CD8-positive, alpha-beta memory T cell (primary cell): ENCODE measurements at regions of chr14 and their contacts with region 1.

Region 1: DNA sequence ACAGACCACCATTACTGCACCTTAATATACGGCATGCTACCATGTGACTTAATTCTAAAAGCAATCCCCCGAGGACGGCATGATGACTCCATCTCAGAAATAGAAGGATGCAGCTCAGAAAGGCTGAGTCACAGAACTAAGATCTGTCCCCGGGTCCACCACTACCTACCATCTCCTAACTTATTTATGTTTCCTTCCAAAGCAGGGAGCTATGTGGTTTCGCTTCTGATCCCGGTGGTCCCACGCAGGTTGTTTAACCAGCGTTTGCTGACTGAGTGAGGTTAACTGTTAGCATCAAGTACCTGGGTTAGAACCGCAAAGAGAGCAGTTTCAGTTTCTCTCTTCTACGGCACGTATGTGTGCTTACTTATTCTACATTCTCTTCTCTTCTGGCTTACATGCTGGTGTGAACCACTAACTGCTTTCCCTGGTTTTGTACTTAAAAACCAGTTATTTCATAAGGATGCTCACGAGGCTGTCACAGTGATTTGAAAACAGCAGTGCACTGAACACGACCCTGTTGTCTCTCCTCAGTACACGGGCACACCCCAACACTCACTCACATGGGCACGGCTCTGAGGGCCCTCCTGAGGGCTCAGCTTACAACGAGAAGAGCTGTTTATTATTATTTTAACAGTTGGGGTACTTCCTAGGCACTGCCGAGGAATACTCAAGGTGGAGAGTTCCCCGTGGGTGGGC is 66.7 kb downstream of the CCDC88C start:
- DNase-seq: peak; percentile 40 to 80 (median 78)
- H3K4me3 ChIP-seq: peak overlapping the region; percentile 62
- H3K4me3 Mint-ChIP-seq: peak overlapping the region; percentile 77 to 93 (median 85)
- H3K27ac ChIP-seq: peak overlapping the region; percentile 66
- H3K27ac Mint-ChIP-seq: peak overlapping the region; percentile 91 to 99 (median 98)
- H3K4me1 ChIP-seq: peaks cover 86% of the 10 kb centered on the region
- H3K4me1 Mint-ChIP-seq: peaks cover 91 to 97% (median 95%) of the 10 kb centered on the region in 3 donors
- H3K27me3 ChIP-seq: no peaks in the 10 kb centered on the region
- H3K27me3 Mint-ChIP-seq: no peaks in the 10 kb centered on the region

Region 2: DNA sequence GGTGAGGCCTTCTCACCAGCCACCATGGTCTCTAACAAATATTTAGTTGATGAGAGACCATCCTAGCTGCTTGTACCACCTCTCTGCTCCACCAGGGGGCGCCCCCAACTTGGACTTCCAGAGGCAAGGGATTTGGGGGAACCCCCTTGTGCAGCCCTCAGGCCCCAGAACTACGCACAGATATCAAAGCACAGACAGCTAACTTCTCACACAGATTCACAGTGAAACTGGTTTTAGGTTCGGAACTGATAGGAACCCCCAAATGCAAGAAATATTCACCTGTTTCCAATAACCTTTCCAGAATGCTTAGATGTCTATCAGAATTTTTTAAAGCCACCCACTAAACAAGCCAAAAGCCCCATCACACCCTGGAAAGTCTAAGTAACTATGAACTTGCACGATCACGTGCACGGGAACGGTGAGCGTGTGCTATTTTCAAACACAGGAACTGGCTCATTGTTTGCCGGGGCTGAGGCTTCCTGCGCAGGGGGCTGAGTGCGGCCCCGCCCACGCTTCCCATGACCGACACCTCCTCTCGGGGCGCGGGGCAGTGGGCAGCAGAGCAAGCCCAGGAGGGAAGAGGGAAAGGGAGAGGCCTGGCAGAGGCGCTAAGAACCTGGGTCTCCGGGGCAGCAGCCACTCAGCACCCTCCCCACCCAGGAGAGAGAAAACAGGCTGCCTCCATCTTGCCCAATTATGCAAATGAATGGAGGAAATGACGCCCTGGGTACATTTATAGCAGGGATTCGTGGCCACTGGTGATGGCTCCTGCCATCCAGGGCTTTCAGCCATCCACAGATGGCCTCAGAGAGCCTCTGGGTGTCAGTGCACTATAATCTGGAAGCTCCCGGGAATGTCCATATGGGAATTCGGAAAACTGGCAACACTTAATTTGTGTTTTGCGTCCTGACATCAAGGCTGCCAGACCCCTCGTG is 27.0 kb before region 1 on chr14:
- CTCF ChIA-PET with region 1: interaction called, 52 read pairs
- POLR2A ChIA-PET with region 1: interaction called, 10 read pairs
- DNase-seq: peak; percentile 86 to 94 (median 91)
- H3K4me3 ChIP-seq: peak overlapping the region; percentile 32
- H3K4me3 Mint-ChIP-seq: peak overlapping the region; percentile 60 to 92 (median 82)
- H3K27ac ChIP-seq: peak overlapping the region; percentile 83
- H3K27ac Mint-ChIP-seq: peak overlapping the region; percentile 97 to 99 (median 98)
- H3K4me1 ChIP-seq: peaks cover 94% of the 10 kb centered on the region
- H3K4me1 Mint-ChIP-seq: peaks cover 67 to 87% (median 86%) of the 10 kb centered on the region in 3 donors
- H3K27me3 ChIP-seq: no peaks in the 10 kb centered on the region
- H3K27me3 Mint-ChIP-seq: peaks cover 0 to 2% of the 10 kb centered on the region in 2 donors

Region 3: GRCh38 chr14:91367173-91368171 is 16.5 kb after region 1 on chr14:
- CTCF ChIA-PET with region 1: interaction called, 95 read pairs
- POLR2A ChIA-PET with region 1: interaction called, 5 read pairs
- DNase-seq: peak; percentile 66 to 82 (median 78)
- H3K4me3 ChIP-seq: peak overlapping the region; percentile 47
- H3K4me3 Mint-ChIP-seq: peak overlapping the region; percentile 71 to 90 (median 77)
- H3K27ac ChIP-seq: peak overlapping the region; percentile 40
- H3K27ac Mint-ChIP-seq: peak overlapping the region; percentile 86 to 98 (median 96)
- H3K4me1 ChIP-seq: peaks cover 97% of the 10 kb centered on the region
- H3K4me1 Mint-ChIP-seq: peaks cover 81 to 98% (median 90%) of the 10 kb centered on the region in 3 donors
- H3K27me3 ChIP-seq: no peaks in the 10 kb centered on the region
- H3K27me3 Mint-ChIP-seq: peaks cover 0 to 2% of the 10 kb centered on the region in 2 donors

Region 4: GRCh38 chr14:91388551-91388975 is 37.6 kb after region 1 on chr14:
- CTCF ChIA-PET with region 1: interaction called, 16 read pairs
- POLR2A ChIA-PET with region 1: interaction called, 5 read pairs
- DNase-seq: peak in 2 of 5 donors; percentile 63 to 67
- H3K4me3 ChIP-seq: peak overlapping the region; percentile 33
- H3K4me3 Mint-ChIP-seq: peak overlapping the region; percentile 63 to 84 (median 73)
- H3K27ac ChIP-seq: no peak overlapping the region
- H3K27ac Mint-ChIP-seq: peak overlapping the region; percentile 84 to 93 (median 88)
- H3K4me1 ChIP-seq: peaks cover 99% of the 10 kb centered on the region
- H3K4me1 Mint-ChIP-seq: peaks cover 86 to 97% (median 93%) of the 10 kb centered on the region in 3 donors
- H3K27me3 ChIP-seq: no peaks in the 10 kb centered on the region
- H3K27me3 Mint-ChIP-seq: no peaks in the 10 kb centered on the region

Region 5: DNA sequence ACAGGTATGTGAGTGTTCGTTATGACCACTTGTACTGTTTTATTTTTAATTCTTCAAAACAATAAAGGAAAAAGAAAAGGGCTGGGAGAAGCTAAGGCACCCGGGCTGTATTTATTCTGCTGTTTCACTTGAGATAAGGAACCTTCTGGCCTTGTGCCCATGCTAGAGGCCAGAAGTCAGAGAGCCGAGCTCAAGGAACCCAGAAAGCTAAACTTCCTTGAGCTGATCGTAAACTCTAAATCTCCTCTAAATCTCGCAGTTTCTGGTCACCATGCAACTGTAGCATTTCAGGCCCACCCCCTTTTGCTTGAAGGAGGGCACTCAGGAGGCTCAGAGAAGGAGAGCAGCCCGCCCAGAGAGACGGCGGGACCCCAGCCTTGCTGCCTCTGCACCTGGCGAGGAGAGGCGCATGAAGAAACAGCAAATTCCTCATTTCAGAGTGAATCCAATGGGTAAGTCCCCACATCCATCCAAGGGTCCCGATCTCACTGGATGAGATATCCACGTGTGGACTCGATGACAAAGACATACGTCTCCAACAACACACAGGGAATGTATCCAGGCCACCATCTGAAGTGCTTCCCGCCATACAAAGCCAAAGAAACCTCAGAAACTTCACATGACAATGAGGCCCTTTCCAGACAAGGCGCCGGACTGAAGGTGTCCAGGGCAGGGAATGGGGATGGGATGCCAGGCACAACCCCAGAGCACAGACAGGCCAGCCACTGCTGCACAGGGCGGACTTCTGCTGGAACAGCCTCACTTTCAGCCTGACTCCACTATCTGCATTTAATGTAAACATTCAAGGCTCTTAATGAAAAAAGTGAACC is 52.0 kb after region 1 on chr14:
- CTCF ChIA-PET with region 1: interaction called, 48 read pairs
- POLR2A ChIA-PET with region 1: interaction called, 9 read pairs
- DNase-seq: peak in 2 of 5 donors; percentile 49 to 51
- H3K4me3 ChIP-seq: peak overlapping the region; percentile 40
- H3K4me3 Mint-ChIP-seq: peak overlapping the region; percentile 68 to 91 (median 85)
- H3K27ac ChIP-seq: peak overlapping the region; percentile 53
- H3K27ac Mint-ChIP-seq: peak overlapping the region; percentile 92 to 100 (median 95)
- H3K4me1 ChIP-seq: peaks cover 95% of the 10 kb centered on the region
- H3K4me1 Mint-ChIP-seq: peaks cover 90 to 97% (median 94%) of the 10 kb centered on the region in 3 donors
- H3K27me3 ChIP-seq: no peaks in the 10 kb centered on the region
- H3K27me3 Mint-ChIP-seq: peaks cover 0 to 1% of the 10 kb centered on the region in 2 donors